Activated naive CD4-positive, alpha-beta T cell treated with anti-CD3 and anti-CD28 coated beads for 36 hours (primary cell): ENCODE measurements at regions of chr15 and their contacts with region 1.

Region 1: GRCh38 chr15:38440353-38441129 is 13.4 kb upstream of the FAM98B start:
- DNase-seq: peak; percentile 64
- H3K4me3 Mint-ChIP-seq: no peak overlapping the region
- H3K27ac Mint-ChIP-seq: no peak overlapping the region
- H3K4me1 Mint-ChIP-seq: peaks cover 4% of the 10 kb centered on the region
- H3K27me3 Mint-ChIP-seq: no peaks in the 10 kb centered on the region

Region 2: GRCh38 chr15:38297623-38298388 is 142.7 kb before region 1 on chr15:
- CTCF ChIA-PET with region 1: no interaction called
- intact Hi-C with region 1: no loop called
- DNase-seq: no peak
- H3K4me3 Mint-ChIP-seq: no peak overlapping the region
- H3K27ac Mint-ChIP-seq: no peak overlapping the region
- H3K4me1 Mint-ChIP-seq: no peaks in the 10 kb centered on the region
- H3K27me3 Mint-ChIP-seq: no peaks in the 10 kb centered on the region

Region 3: DNA sequence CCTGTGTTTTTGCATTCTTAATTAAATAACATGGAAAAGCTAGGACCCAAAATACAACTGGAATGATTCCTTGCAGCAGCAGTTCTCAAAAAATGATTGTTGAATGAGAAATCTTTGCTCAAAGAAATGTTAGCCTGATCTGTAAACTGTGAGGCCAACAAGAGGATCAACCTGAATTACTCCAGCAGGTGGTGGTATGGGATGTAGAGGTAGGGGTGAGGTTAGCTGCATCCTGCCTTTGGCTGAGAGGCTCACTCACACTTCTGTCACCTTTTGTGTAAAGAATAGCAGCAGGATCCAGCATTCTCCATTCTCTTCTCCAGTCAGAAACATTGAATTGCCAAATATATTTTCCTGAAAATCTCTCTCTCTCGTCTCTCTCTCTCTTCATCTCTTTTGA is 13.2 kb before region 1 on chr15:
- CTCF ChIA-PET with region 1: interaction called, 24 read pairs
- intact Hi-C with region 1: no loop called
- DNase-seq: peak; percentile 23
- H3K4me3 Mint-ChIP-seq: no peak overlapping the region
- H3K27ac Mint-ChIP-seq: peak overlapping the region; percentile 43
- H3K4me1 Mint-ChIP-seq: no peaks in the 10 kb centered on the region
- H3K27me3 Mint-ChIP-seq: peaks cover 9% of the 10 kb centered on the region

Region 4: DNA sequence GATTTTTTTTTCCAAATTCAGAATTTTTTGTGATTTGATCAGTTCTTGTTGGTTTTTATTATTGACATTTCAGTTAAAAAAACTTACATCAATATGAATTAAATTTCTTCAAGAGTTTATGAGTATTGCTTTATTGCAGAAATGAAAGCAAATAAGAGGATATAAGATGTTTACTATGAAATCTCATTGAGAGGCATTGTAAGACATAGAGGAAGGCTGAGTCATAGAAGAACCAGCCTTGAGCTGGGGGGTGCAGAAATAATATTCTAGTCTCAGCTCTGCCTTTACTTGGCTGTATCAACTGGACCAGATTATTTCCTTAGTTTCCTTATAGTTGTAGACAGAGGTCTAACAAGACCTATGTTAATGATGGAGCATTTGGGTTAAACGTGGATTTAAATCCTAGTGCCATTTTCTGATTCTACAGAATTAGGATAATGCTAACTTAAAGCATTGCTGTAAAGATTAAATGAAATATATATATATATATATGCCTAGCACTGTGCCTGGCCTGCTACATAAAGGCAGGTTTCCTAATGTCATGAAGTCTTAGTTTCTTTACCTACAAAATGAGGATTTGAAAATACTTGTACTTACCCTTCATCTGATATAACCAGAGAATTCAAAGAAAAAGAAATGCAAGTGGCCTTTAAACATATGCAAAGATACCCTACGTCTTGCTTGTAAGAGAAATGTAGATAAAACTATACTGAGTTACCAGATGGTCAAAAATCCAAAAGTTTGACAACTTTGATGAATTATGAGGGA is 20.7 kb after region 1 on chr15:
- CTCF ChIA-PET with region 1: interaction called, 24 read pairs
- intact Hi-C with region 1: no loop called
- DNase-seq: no peak
- H3K4me3 Mint-ChIP-seq: no peak overlapping the region
- H3K27ac Mint-ChIP-seq: no peak overlapping the region
- H3K4me1 Mint-ChIP-seq: peaks cover 41% of the 10 kb centered on the region
- H3K27me3 Mint-ChIP-seq: no peaks in the 10 kb centered on the region

Region 5: GRCh38 chr15:38683382-38684242 is 243.1 kb after region 1 on chr15:
- CTCF ChIA-PET with region 1: interaction called, 306 read pairs
- intact Hi-C with region 1: loop called (anchors 1 kb)
- DNase-seq: peak; percentile 89
- H3K4me3 Mint-ChIP-seq: no peak overlapping the region
- H3K27ac Mint-ChIP-seq: peak overlapping the region; percentile 38
- H3K4me1 Mint-ChIP-seq: peaks cover 66% of the 10 kb centered on the region
- H3K27me3 Mint-ChIP-seq: no peaks in the 10 kb centered on the region

Region 6: GRCh38 chr15:38707802-38708671 is 267.5 kb after region 1 on chr15:
- CTCF ChIA-PET with region 1: interaction called, 63 read pairs
- intact Hi-C with region 1: no loop called
- DNase-seq: peak; percentile 53
- H3K4me3 Mint-ChIP-seq: no peak overlapping the region
- H3K27ac Mint-ChIP-seq: no peak overlapping the region
- H3K4me1 Mint-ChIP-seq: no peaks in the 10 kb centered on the region
- H3K27me3 Mint-ChIP-seq: no peaks in the 10 kb centered on the region